Dorsolateral prefrontal cortex (tissue), 120 donors: ENCODE measurements at regions of chr18 and their contacts with region 1.

Region 1: DNA sequence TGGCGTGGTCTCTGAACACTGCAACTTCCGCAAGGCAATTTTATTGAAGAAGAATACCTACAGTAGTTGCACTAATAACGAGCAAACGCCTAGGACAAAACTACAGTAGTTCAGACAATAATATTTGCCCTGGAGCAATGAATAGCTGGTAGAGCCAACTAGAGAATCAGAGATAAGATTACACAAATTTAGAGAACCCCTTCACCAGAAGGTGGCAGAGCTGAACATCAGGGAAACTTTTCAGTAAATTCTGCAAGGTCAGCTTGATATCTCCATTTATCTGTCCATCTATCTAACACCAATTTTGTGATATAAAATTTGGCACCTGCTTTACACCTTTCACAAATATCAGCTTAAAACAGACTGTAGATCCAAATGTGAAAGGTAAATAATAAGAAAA is 43.8 kb downstream of the CDH19 start:
- DNase-seq: peak in 1 of 10 donors; percentile 30
- H3K4me3 ChIP-seq: peak overlapping the region in 1 of 59 donors; percentile 14
- H3K27ac ChIP-seq: peak overlapping the region in 18 of 59 donors; percentile 3 to 74 (median 48)
- H3K27me3 ChIP-seq: peaks cover 0 to 3% (median 0%) of the 10 kb centered on the region in 45 donors
- CTCF ChIP-seq: peak in 55 of 56 donors; percentile 25 to 82 (median 65)

Region 2: DNA sequence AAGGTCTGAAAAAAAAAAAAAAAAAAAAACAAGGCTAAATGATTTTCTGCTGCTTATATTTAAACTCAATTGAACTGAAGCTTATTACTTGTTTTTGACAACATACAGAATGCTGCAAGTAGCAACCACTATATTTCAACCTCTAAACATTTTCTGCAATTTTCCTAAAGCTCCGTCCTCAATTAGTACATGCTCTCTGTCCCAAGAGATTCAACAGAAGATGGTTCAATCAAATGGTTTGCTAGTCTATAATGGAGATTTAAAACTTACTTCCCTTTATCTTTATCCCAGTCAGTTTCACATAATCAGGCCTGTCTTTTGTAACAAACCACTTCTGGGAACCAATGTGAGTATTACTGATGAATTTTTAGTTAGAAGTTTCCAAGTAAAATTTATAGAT is 1294.3 kb before region 1 on chr18:
- intact Hi-C with region 1: no loop called
- DNase-seq: no peak
- H3K4me3 ChIP-seq: no peak overlapping the region
- H3K27ac ChIP-seq: no peak overlapping the region
- H3K27me3 ChIP-seq: no peaks in the 10 kb centered on the region
- CTCF ChIP-seq: no peak

Region 3: GRCh38 chr18:66603941-66604627 is 44.0 kb after region 1 on chr18 and contains the start of gene CDH19:
- intact Hi-C with region 1: loop called (anchors 5 to 10 kb)
- DNase-seq: peak in 7 of 10 donors; percentile 11 to 59 (median 43)
- H3K4me3 ChIP-seq: peak within 1 kb of the TSS in 58 of 59 donors; percentile 8 to 70 (median 46)
- H3K27ac ChIP-seq: peak within 1 kb of the TSS in 58 of 59 donors; percentile 38 to 91 (median 81)
- H3K27me3 ChIP-seq: no peaks in the 10 kb centered on the region
- CTCF ChIP-seq: peak in 8 of 56 donors; percentile 4 to 22 (median 6)
- total RNA-seq, gene CDH19: 3.2 to 71.4 (median 12.6) TPM

Region 4: GRCh38 chr18:66616523-66616983 is 56.5 kb after region 1 on chr18:
- intact Hi-C with region 1: loop called in 1 of 2 experiments (anchors 5 kb)
- DNase-seq: peak in 5 of 10 donors; percentile 27 to 45 (median 43)
- H3K4me3 ChIP-seq: no peak overlapping the region
- H3K27ac ChIP-seq: no peak overlapping the region
- H3K27me3 ChIP-seq: no peaks in the 10 kb centered on the region
- CTCF ChIP-seq: peak in 53 of 56 donors; percentile 21 to 77 (median 55)

Region 5: GRCh38 chr18:66682855-66683322 is 122.8 kb after region 1 on chr18:
- intact Hi-C with region 1: loop called in 1 of 2 experiments (anchors 5 kb)
- DNase-seq: peak in 6 of 10 donors; percentile 11 to 50 (median 38)
- H3K4me3 ChIP-seq: peak overlapping the region in 58 of 59 donors; percentile 3 to 69 (median 44)
- H3K27ac ChIP-seq: peak overlapping the region; percentile 54 to 97 (median 88)
- H3K27me3 ChIP-seq: no peaks in the 10 kb centered on the region
- CTCF ChIP-seq: peak in 6 of 56 donors; percentile 9 to 32 (median 18)

Region 6: GRCh38 chr18:66749030-66749429 is 188.9 kb after region 1 on chr18:
- intact Hi-C with region 1: loop called (anchors 10 kb)
- DNase-seq: peak in 1 of 10 donors; percentile 15
- H3K4me3 ChIP-seq: no peak overlapping the region
- H3K27ac ChIP-seq: no peak overlapping the region
- H3K27me3 ChIP-seq: peaks cover 0 to 2% (median 0%) of the 10 kb centered on the region in 45 donors
- CTCF ChIP-seq: peak in 55 of 56 donors; percentile 11 to 81 (median 54)